Gastrocnemius medialis (tissue), 4 donors: ENCODE measurements at regions of chr3 and their contacts with region 1.

Region 1: DNA sequence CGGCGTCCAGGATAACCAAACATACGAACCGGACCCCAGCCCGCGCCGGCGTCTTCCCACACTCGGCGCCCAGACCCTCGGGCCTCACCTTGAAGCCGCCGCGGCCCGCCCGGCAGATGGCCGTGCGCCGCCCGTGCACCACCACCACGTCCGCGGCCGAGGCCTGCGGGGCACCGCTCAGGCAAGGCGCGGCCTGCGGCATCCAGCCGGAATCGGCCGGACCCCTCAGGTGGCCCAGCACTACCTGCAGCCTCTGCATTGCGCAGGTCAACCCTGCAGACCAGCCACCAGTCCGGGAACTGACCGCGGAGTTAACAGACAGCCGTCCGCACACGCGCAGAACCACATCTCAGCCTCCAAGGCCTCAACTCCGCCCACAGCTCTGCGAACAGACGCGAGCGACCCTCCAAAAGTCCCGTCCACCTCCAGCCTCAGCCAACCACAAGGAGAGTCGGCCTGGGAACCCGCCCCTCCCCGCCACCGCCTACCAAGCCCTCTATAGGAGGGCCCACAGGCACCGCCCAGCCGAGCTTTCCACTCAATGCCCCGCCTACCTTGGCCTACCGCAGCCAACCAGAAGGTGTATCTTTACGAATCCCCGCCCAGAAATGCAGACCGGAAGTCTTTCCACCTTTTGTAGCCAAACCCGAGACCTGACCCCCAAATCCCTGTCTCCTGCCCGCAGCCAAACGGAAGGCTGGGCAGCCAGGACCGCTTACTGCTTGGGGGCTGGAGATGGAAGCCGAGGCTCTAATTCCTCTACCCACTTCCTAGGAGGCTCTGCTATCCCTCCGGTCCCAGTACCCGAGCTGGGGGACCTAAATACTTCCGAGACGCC is at the start of gene ACAA1:
- DNase-seq: peak; percentile 100
- ATAC-seq: peak; percentile 91 to 95
- H3K4me3 ChIP-seq: peak within 1 kb of the TSS; percentile 73 to 99 (median 82)
- H3K27ac ChIP-seq: peak within 1 kb of the TSS; percentile 88 to 97 (median 92)
- H3K4me1 ChIP-seq: peaks cover 19 to 30% of the 10 kb centered on the region in 2 donors
- H3K27me3 ChIP-seq: no peaks in the 10 kb centered on the region
- CTCF ChIP-seq: peak in 1 of 5 experiments; percentile 8
- POLR2A ChIP-seq: peak; percentile 70 to 89
- total RNA-seq, gene ACAA1: 24.5 to 31.2 (median 29.3) TPM

Region 2: DNA sequence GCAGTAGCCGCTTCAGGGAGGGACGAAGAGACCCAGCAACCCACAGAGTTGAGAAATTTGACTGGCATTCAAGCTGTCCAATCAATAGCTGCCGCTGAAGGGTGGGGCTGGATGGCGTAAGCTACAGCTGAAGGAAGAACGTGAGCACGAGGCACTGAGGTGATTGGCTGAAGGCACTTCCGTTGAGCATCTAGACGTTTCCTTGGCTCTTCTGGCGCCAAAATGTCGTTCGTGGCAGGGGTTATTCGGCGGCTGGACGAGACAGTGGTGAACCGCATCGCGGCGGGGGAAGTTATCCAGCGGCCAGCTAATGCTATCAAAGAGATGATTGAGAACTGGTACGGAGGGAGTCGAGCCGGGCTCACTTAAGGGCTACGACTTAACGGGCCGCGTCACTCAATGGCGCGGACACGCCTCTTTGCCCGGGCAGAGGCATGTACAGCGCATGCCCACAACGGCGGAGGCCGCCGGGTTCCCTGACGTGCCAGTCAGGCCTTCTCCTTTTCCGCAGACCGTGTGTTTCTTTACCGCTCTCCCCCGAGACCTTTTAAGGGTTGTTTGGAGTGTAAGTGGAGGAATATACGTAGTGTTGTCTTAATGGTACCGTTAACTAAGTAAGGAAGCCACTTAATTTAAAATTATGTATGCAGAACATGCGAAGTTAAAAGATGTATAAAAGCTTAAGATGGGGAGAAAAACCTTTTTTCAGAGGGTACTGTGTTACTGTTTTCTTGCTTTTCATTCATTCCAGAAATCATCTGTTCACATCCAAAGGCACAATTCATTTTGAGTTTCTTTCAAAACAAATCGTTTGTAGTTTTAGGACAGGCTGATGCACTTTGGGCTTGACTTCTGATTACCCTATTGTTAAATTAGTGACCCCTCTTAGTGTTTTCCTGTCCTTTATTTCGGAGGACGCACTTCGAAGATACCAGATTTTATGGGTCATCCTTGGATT is 1143.4 kb before region 1 on chr3 and contains the start of gene MLH1:
- in situ Hi-C with region 1: no loop called
- intact Hi-C with region 1: loop called (anchors 10 kb)
- DNase-seq: peak; percentile 88 to 100
- ATAC-seq: peak; percentile 90 to 94
- H3K4me3 ChIP-seq: peak within 1 kb of the TSS; percentile 70 to 86 (median 80)
- H3K27ac ChIP-seq: peak within 1 kb of the TSS; percentile 92 to 97 (median 96)
- H3K4me1 ChIP-seq: peaks cover 62 to 67% of the 10 kb centered on the region in 2 donors
- H3K27me3 ChIP-seq: no peaks in the 10 kb centered on the region
- CTCF ChIP-seq: no peak
- POLR2A ChIP-seq: peak; percentile 62 to 77
- total RNA-seq, gene MLH1: 25.2 to 52.5 (median 36.4) TPM

Region 3: GRCh38 chr3:38164966-38165680 is 28.1 kb after region 1 on chr3 and contains the start of gene OXSR1:
- in situ Hi-C with region 1: no loop called
- intact Hi-C with region 1: loop called (anchors 1 kb)
- DNase-seq: peak; percentile 98 to 99
- ATAC-seq: peak; percentile 95 to 97
- H3K4me3 ChIP-seq: peak within 1 kb of the TSS; percentile 84 to 93 (median 88)
- H3K27ac ChIP-seq: peak within 1 kb of the TSS; percentile 94 to 99 (median 96)
- H3K4me1 ChIP-seq: peaks cover 28 to 30% of the 10 kb centered on the region in 2 donors
- H3K27me3 ChIP-seq: no peaks in the 10 kb centered on the region
- CTCF ChIP-seq: peak in 1 of 5 experiments; percentile 9
- POLR2A ChIP-seq: peak; percentile 88 to 91
- total RNA-seq, gene OXSR1: 37.9 to 50.0 (median 43.2) TPM

Region 4: GRCh38 chr3:38346587-38347410 is 209.8 kb after region 1 on chr3 and contains the start of gene XYLB:
- in situ Hi-C with region 1: no loop called
- intact Hi-C with region 1: loop called (anchors 5 kb)
- DNase-seq: peak; percentile 73 to 76
- ATAC-seq: peak; percentile 95 to 97
- H3K4me3 ChIP-seq: peak within 1 kb of the TSS; percentile 60 to 81 (median 64)
- H3K27ac ChIP-seq: peak within 1 kb of the TSS in 3 of 4 donors; percentile 29 to 74 (median 30)
- H3K4me1 ChIP-seq: no peaks in the 10 kb centered on the region
- H3K27me3 ChIP-seq: no peaks in the 10 kb centered on the region
- CTCF ChIP-seq: peak; percentile 75 to 88 (median 87)
- POLR2A ChIP-seq: no peak
- total RNA-seq, gene XYLB: 0.23 to 1.1 (median 0.44) TPM

Region 5: GRCh38 chr3:38479431-38480092 is 342.6 kb after region 1 on chr3:
- in situ Hi-C with region 1: loop called in 3 of 4 experiments (anchors 25 kb)
- intact Hi-C with region 1: loop called (anchors 10 kb)
- DNase-seq: peak; percentile 56 to 70
- ATAC-seq: peak; percentile 82 to 94
- H3K4me3 ChIP-seq: no peak overlapping the region
- H3K27ac ChIP-seq: peak overlapping the region in 2 of 4 donors; percentile 9 to 14
- H3K4me1 ChIP-seq: peaks cover 0 to 12% of the 10 kb centered on the region in 2 donors
- H3K27me3 ChIP-seq: no peaks in the 10 kb centered on the region
- CTCF ChIP-seq: peak; percentile 70 to 94 (median 82)
- POLR2A ChIP-seq: no peak